ENCODE measurements at regions of chr11 and their contacts with region 1.

Region 1: GRCh38 chr11:17389211-17389956 is 925 bp upstream of the KCNJ11 start:
- DNase-seq: no peak
- H3K4me3 ChIP-seq: peak overlapping the region; percentile 34
- CTCF ChIP-seq: peak; percentile 70

Region 2: DNA sequence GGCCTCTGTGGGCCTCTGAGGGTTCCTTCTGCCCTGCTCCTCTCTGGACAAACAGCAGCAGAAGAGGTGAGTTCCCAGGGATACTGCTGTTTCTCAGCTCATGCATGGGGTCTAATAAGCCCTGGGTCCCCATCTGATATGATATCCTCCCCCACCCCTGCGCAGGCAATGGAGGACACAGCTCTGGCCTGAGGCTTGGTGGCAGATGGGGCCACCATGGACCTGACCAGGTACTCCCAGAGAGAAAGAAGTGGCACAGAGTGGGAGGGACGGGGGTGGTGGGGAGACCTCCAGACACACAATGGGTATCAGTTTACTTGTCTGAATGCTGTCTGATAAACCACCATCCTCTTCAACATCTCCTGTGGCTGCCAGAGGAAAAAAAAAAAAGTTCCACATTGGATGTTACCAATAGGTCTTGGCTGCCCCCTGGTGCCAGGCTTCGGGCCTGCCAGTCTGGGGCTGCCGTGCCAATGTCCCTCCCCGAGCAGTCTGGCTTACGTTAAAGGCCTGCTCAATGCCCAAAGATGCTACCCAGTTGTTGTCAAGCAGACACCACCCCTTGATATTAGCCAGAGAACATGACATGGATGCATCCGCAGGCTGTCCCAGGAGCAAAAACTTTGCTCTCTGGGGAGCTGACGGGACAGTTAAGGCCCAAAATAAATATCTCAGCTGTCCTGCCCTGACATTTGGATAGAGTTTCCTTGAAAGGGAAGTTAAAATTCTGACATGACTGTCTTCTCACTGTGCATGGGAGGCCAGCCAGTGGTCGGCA is 115.1 kb after region 1 on chr11:
- CTCF ChIA-PET with region 1: interaction called, 116 read pairs
- POLR2A ChIA-PET with region 1: no interaction called
- DNase-seq: no peak
- H3K4me3 ChIP-seq: no peak overlapping the region
- CTCF ChIP-seq: peak; percentile 87

Measured in AG04449 (cell line).